Caco-2 (cell line): ENCODE measurements at regions of chr11 and their contacts with region 1.

Region 1: GRCh38 chr11:67118801-67119584 is at the start of gene KDM2A:
- DNase-seq: peak; percentile 99 to 100
- H3K4me3 ChIP-seq: peak within 1 kb of the TSS; percentile 92
- H3K4me3 Mint-ChIP-seq: peak within 1 kb of the TSS; percentile 99
- H3K27ac Mint-ChIP-seq: peak within 1 kb of the TSS; percentile 96
- H3K4me1 ChIP-seq: peaks cover 54% of the 10 kb centered on the region
- H3K4me1 Mint-ChIP-seq: peaks cover 22% of the 10 kb centered on the region
- H3K27me3 ChIP-seq: no peaks in the 10 kb centered on the region
- H3K27me3 Mint-ChIP-seq: no peaks in the 10 kb centered on the region
- CTCF ChIP-seq: peak in 1 of 2 experiments; percentile 47
- total RNA-seq, gene KDM2A: 122 and 134 TPM in 2 replicates

Region 2: GRCh38 chr11:67006139-67006884 is 112.7 kb before region 1 on chr11:
- CTCF ChIA-PET with region 1: no interaction called
- POLR2A ChIA-PET with region 1: no interaction called
- intact Hi-C with region 1: no loop called
- DNase-seq: peak; percentile 74 to 83
- H3K4me3 ChIP-seq: no peak overlapping the region
- H3K4me3 Mint-ChIP-seq: no peak overlapping the region
- H3K27ac Mint-ChIP-seq: no peak overlapping the region
- H3K4me1 ChIP-seq: peaks cover 16% of the 10 kb centered on the region; the same call in 1 of the 2 replicates
- H3K4me1 Mint-ChIP-seq: peaks cover 15% of the 10 kb centered on the region
- H3K27me3 ChIP-seq: no peaks in the 10 kb centered on the region
- H3K27me3 Mint-ChIP-seq: no peaks in the 10 kb centered on the region
- CTCF ChIP-seq: no peak

Region 3: GRCh38 chr11:67053896-67054842 is 64.8 kb before region 1 on chr11:
- CTCF ChIA-PET with region 1: interaction called, 10 read pairs
- POLR2A ChIA-PET with region 1: interaction called, 8 read pairs
- intact Hi-C with region 1: loop called (anchors 2 kb)
- DNase-seq: peak; percentile 83 to 85
- H3K4me3 ChIP-seq: no peak overlapping the region
- H3K4me3 Mint-ChIP-seq: no peak overlapping the region
- H3K27ac Mint-ChIP-seq: peak overlapping the region; percentile 92
- H3K4me1 ChIP-seq: peaks cover 40% of the 10 kb centered on the region
- H3K4me1 Mint-ChIP-seq: peaks cover 26% of the 10 kb centered on the region
- H3K27me3 ChIP-seq: no peaks in the 10 kb centered on the region
- H3K27me3 Mint-ChIP-seq: no peaks in the 10 kb centered on the region
- CTCF ChIP-seq: peak; percentile 96 to 99

Region 4: GRCh38 chr11:67082035-67082791 is 36.8 kb before region 1 on chr11:
- CTCF ChIA-PET with region 1: interaction called, 10 read pairs
- POLR2A ChIA-PET with region 1: interaction called, 6 read pairs
- intact Hi-C with region 1: loop called (anchors 5 kb)
- DNase-seq: no peak
- H3K4me3 ChIP-seq: no peak overlapping the region
- H3K4me3 Mint-ChIP-seq: no peak overlapping the region
- H3K27ac Mint-ChIP-seq: no peak overlapping the region
- H3K4me1 ChIP-seq: peaks cover 25% of the 10 kb centered on the region
- H3K4me1 Mint-ChIP-seq: peaks cover 21% of the 10 kb centered on the region
- H3K27me3 ChIP-seq: no peaks in the 10 kb centered on the region
- H3K27me3 Mint-ChIP-seq: no peaks in the 10 kb centered on the region
- CTCF ChIP-seq: peak in 1 of 2 experiments; percentile 13

Region 5: DNA sequence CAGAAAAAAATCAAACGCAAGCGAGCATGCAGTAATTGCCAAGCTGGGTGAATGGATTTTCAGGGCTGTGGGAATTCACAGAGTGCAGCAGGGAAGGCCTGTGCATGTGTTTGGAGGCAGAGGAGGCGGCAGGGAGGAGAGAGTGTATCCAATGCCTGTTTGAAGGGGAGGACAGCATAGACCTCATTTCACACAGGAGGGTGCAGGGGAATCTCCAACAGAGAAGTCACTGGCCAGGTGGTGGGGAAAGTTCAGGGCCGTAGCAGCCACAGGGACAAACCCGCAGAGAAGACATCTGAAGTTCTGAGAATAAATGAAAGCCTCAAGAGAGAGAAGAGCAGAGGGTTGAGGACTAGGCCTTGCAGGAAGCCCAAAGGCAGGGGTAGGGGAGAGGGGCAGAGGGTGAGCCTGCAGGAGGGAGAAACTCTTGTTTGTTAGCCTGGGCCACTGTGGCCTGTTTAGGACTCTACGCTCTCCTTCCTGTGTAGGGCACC is 19.1 kb before region 1 on chr11:
- CTCF ChIA-PET with region 1: interaction called, 12 read pairs
- POLR2A ChIA-PET with region 1: no interaction called
- intact Hi-C with region 1: no loop called
- DNase-seq: no peak
- H3K4me3 ChIP-seq: no peak overlapping the region
- H3K4me3 Mint-ChIP-seq: no peak overlapping the region
- H3K27ac Mint-ChIP-seq: no peak overlapping the region
- H3K4me1 ChIP-seq: no peaks in the 10 kb centered on the region; the same call in 1 of the 2 replicates
- H3K4me1 Mint-ChIP-seq: no peaks in the 10 kb centered on the region
- H3K27me3 ChIP-seq: no peaks in the 10 kb centered on the region
- H3K27me3 Mint-ChIP-seq: no peaks in the 10 kb centered on the region
- CTCF ChIP-seq: no peak

Region 6: GRCh38 chr11:67167086-67167485 is 48.1 kb after region 1 on chr11:
- CTCF ChIA-PET with region 1: interaction called, 5 read pairs
- POLR2A ChIA-PET with region 1: no interaction called
- intact Hi-C with region 1: loop called (anchors 2 kb)
- DNase-seq: no peak
- H3K4me3 ChIP-seq: no peak overlapping the region
- H3K4me3 Mint-ChIP-seq: no peak overlapping the region
- H3K27ac Mint-ChIP-seq: no peak overlapping the region
- H3K4me1 ChIP-seq: no peaks in the 10 kb centered on the region
- H3K4me1 Mint-ChIP-seq: no peaks in the 10 kb centered on the region
- H3K27me3 ChIP-seq: no peaks in the 10 kb centered on the region
- H3K27me3 Mint-ChIP-seq: no peaks in the 10 kb centered on the region
- CTCF ChIP-seq: no peak

Region 7: DNA sequence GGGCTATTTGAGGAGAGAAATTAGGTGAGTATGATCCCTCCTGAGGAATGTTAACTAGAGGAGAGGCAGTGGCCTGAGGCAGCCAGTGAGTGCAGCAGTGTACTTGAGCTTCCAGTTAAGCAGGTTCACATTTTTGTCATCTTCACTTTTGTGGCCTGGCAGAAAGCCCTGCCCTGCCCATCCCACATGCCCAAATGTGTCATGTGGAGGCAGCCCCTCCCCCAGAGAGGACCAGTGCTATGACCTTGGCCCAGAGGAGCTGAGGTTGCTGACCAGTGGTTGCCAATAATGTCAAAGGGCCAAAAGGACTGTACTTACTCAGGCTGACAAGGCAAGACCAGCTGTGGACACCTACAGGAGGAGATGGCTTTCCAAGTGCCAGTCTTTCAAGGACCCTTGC is 129.7 kb after region 1 on chr11:
- CTCF ChIA-PET with region 1: interaction called, 4 read pairs
- POLR2A ChIA-PET with region 1: no interaction called
- intact Hi-C with region 1: loop called (anchors 2 kb)
- DNase-seq: peak; percentile 92 to 95
- H3K4me3 ChIP-seq: no peak overlapping the region
- H3K4me3 Mint-ChIP-seq: peak overlapping the region; percentile 52
- H3K27ac Mint-ChIP-seq: peak overlapping the region; percentile 85
- H3K4me1 ChIP-seq: peaks cover 26% of the 10 kb centered on the region
- H3K4me1 Mint-ChIP-seq: peaks cover 44% of the 10 kb centered on the region
- H3K27me3 ChIP-seq: no peaks in the 10 kb centered on the region
- H3K27me3 Mint-ChIP-seq: no peaks in the 10 kb centered on the region
- CTCF ChIP-seq: no peak